ENCODE measurements at regions of chr16 and their contacts with region 1.

Region 1: GRCh38 chr16:87278191-87279095 is 38.7 kb downstream of the C16orf95 start:
- DNase-seq: peak; percentile 72 to 76 (median 72)
- ATAC-seq: peak; percentile 94 to 100 (median 98)
- H3K4me3 ChIP-seq: no peak overlapping the region
- H3K27ac ChIP-seq: no peak overlapping the region
- H3K4me1 ChIP-seq: no peaks in the 10 kb centered on the region
- H3K27me3 ChIP-seq: no peaks in the 10 kb centered on the region
- CTCF ChIP-seq: peak; percentile 81 to 90 (median 84)
- POLR2A ChIP-seq: no peak

Region 2: GRCh38 chr16:86563489-86564345 is 714.7 kb before region 1 on chr16:
- intact Hi-C with region 1: loop called (anchors 5 kb)
- DNase-seq: peak; percentile 84 to 85 (median 85)
- ATAC-seq: peak; percentile 98 to 100 (median 100)
- H3K4me3 ChIP-seq: no peak overlapping the region
- H3K27ac ChIP-seq: no peak overlapping the region
- H3K4me1 ChIP-seq: peaks cover 0 to 10% (median 0%) of the 10 kb centered on the region in 4 donors
- H3K27me3 ChIP-seq: peaks cover 0 to 16% of the 10 kb centered on the region in 2 donors
- CTCF ChIP-seq: peak; percentile 100
- POLR2A ChIP-seq: no peak

Region 3: DNA sequence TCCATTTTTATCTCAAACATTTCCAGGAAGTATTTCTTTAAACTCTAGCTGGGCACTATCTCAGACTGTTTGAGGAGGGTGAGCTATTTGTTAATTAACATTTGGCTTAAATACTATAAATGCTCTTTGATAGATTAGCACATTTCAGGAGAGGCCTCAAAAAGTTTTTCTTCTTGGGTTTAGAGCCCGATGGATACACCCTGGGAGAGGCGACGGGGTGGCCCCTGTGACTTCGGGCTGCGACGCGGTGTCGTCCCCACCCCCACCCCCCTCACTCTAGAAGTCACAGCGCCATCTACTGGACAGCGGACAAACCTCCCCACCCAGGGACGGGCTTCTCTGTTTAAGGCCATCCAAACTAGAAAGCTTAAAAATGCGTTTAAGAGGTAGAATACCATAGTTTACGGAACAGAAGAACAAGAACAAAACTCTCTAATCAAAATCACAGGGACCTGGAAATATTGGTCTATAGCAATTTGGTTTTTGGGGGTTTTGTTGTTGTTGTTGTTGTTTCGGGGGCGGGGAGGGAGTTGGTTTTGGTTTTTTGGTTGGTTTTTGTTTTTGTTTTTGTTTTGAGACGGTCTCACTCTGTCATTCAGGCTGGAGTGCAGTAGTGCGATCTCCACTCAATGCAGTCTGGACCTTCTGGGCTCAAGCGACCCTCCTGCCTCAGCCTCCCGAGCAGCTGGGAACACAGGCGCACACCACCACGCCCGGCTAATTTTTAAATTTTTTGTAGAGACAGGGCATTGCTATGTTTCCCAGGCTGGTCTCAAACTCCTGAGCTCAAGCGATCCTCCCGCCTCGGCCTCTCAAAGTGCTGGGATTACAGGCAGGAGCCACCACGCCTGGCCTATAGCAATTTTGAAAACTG is 215.6 kb before region 1 on chr16:
- intact Hi-C with region 1: loop called in 1 of 2 experiments (anchors 10 kb)
- DNase-seq: peak in 2 of 3 donors; percentile 56 to 59
- ATAC-seq: peak; percentile 73 to 87 (median 74)
- H3K4me3 ChIP-seq: no peak overlapping the region
- H3K27ac ChIP-seq: no peak overlapping the region
- H3K4me1 ChIP-seq: no peaks in the 10 kb centered on the region
- H3K27me3 ChIP-seq: no peaks in the 10 kb centered on the region
- CTCF ChIP-seq: peak; percentile 49 to 68 (median 68)
- POLR2A ChIP-seq: no peak

Region 4: GRCh38 chr16:87075319-87075860 is 203.1 kb before region 1 on chr16:
- intact Hi-C with region 1: no loop called
- DNase-seq: no peak
- ATAC-seq: no peak
- H3K4me3 ChIP-seq: no peak overlapping the region
- H3K27ac ChIP-seq: no peak overlapping the region
- H3K4me1 ChIP-seq: no peaks in the 10 kb centered on the region
- H3K27me3 ChIP-seq: no peaks in the 10 kb centered on the region
- CTCF ChIP-seq: no peak
- POLR2A ChIP-seq: no peak

Region 5: GRCh38 chr16:87207509-87207908 is 70.9 kb before region 1 on chr16:
- intact Hi-C with region 1: no loop called
- DNase-seq: no peak
- ATAC-seq: no peak
- H3K4me3 ChIP-seq: no peak overlapping the region
- H3K27ac ChIP-seq: no peak overlapping the region
- H3K4me1 ChIP-seq: no peaks in the 10 kb centered on the region
- H3K27me3 ChIP-seq: no peaks in the 10 kb centered on the region
- CTCF ChIP-seq: no peak
- POLR2A ChIP-seq: no peak

Region 6: DNA sequence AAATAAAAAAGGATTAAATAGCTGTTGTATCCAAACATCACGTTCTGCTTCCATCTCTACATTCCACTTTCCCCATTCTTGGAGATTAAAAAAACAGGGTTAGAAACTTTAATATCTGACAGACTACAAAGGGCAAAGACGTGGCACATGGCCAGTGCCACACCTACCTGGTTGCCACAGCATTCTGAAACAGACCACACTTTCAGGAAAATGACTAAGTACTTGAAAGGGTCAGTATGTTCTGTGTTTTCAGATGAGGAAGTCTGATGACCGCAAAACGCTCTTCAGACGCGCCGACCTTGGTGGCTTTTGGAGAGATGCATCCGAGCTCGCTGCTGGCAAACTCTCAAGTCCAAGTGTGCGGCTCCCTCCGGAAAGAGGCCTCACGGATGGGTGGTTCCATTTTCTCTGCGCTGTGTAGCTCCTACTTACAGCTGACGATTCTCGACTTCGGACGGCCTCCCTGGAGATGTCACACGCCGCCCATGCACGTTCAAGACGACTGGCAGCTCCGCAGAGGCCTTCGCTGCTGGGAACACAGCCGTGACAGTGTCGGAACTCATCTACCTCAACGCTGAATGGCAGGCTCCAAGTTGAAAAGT is 129.2 kb after region 1 on chr16:
- intact Hi-C with region 1: no loop called
- DNase-seq: peak in 2 of 3 donors; percentile 44 to 55
- ATAC-seq: peak; percentile 9 to 50 (median 48)
- H3K4me3 ChIP-seq: no peak overlapping the region
- H3K27ac ChIP-seq: no peak overlapping the region
- H3K4me1 ChIP-seq: no peaks in the 10 kb centered on the region
- H3K27me3 ChIP-seq: no peaks in the 10 kb centered on the region
- CTCF ChIP-seq: no peak
- POLR2A ChIP-seq: no peak